A673 (cell line): ENCODE measurements at regions of chr13 and their contacts with region 1.

Region 1: GRCh38 chr13:36480726-36481427 is 48.6 kb downstream of the CCNA1 start:
- DNase-seq: peak; percentile 99
- H3K4me3 ChIP-seq: no peak overlapping the region
- H3K27ac ChIP-seq: peak overlapping the region; percentile 100
- H3K4me1 ChIP-seq: peaks cover 42% of the 10 kb centered on the region
- H3K27me3 ChIP-seq: no peaks in the 10 kb centered on the region
- CTCF ChIP-seq: no peak

Region 2: DNA sequence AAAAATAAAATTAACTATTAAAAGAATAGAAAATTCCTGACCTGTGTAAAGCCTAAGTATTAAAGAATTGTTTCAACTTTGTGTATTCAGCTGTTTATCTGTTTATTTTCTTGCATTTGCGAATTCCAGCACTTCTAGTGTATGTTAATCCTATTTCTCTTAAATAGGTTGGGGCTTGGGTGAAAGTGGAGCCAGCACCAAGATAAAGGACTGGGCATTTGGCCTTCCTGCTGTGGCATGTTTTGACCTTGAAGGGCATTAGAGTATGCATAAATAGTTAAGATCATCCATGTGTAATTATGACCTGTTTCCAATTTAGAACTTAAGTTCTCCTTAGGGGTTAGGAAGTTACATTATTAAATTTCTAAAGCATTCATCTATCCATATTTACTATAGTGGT is 1387.5 kb before region 1 on chr13:
- CTCF ChIA-PET with region 1: no interaction called
- POLR2A ChIA-PET with region 1: no interaction called
- intact Hi-C with region 1: no loop called
- DNase-seq: no peak
- H3K4me3 ChIP-seq: no peak overlapping the region
- H3K27ac ChIP-seq: no peak overlapping the region
- H3K4me1 ChIP-seq: no peaks in the 10 kb centered on the region
- H3K27me3 ChIP-seq: no peaks in the 10 kb centered on the region
- CTCF ChIP-seq: no peak

Region 3: DNA sequence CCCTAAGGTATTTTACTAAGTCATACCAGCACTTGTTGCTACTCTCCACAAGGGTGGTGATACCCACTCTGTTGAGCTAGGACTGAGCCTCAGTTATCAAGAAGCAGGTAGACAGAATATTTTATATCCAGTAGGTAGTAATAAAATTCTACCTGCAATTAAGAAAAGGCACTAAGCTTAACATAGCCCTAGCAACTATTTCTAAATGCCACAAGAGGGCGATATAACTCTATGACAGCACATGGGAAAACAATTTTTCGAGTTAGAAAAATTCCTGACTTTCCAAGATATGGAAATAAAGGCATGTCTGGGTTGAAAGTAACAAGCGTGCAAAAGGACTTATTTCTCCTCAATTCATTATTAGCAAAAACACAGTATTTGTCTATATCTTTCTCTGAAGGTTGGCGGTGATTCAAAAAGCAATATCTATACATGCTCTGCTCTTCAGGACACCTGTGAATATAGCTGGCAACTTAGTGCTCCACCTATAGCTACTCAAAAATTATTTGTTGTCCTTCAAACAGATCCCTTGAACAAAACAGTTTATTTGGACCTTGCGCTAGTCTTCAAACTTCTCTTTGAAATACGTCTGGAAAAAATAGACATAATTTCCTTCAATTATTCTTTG is 197.9 kb before region 1 on chr13:
- CTCF ChIA-PET with region 1: interaction called, 4 read pairs
- POLR2A ChIA-PET with region 1: no interaction called
- intact Hi-C with region 1: loop called (anchors 2 kb)
- DNase-seq: peak; percentile 71
- H3K4me3 ChIP-seq: no peak overlapping the region
- H3K27ac ChIP-seq: no peak overlapping the region
- H3K4me1 ChIP-seq: peaks cover 15% of the 10 kb centered on the region
- H3K27me3 ChIP-seq: no peaks in the 10 kb centered on the region
- CTCF ChIP-seq: peak; percentile 86

Region 4: GRCh38 chr13:36420437-36420891 is 60.4 kb before region 1 on chr13:
- CTCF ChIA-PET with region 1: interaction called, 3 read pairs
- POLR2A ChIA-PET with region 1: no interaction called
- intact Hi-C with region 1: loop called (anchors 2 kb)
- DNase-seq: peak; percentile 92
- H3K4me3 ChIP-seq: no peak overlapping the region
- H3K27ac ChIP-seq: peak overlapping the region; percentile 31
- H3K4me1 ChIP-seq: peaks cover 39% of the 10 kb centered on the region
- H3K27me3 ChIP-seq: no peaks in the 10 kb centered on the region
- CTCF ChIP-seq: peak; percentile 92

Region 5: DNA sequence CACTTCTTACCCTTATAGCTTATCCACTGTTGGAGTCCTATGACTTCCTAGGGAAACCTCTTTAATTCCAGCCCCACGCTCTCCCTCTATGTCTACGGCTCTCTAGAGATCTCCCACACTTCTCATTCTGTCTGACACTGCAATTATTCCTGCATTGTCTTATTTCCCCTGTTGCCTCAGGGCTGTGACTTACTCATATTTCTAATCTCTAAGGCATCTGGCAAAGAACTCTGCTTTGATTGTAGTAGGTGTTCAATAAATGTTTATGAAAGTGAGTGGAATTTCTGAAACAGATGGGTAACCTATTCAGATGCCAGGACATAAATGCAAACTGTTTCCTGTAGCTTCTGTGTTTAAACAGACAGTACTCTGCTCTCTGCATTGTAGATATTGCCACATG is 90.6 kb after region 1 on chr13:
- CTCF ChIA-PET with region 1: no interaction called
- POLR2A ChIA-PET with region 1: no interaction called
- intact Hi-C with region 1: loop called (anchors 2 kb)
- DNase-seq: peak; percentile 87
- H3K4me3 ChIP-seq: no peak overlapping the region
- H3K27ac ChIP-seq: peak overlapping the region; percentile 82
- H3K4me1 ChIP-seq: peaks cover 48% of the 10 kb centered on the region
- H3K27me3 ChIP-seq: no peaks in the 10 kb centered on the region
- CTCF ChIP-seq: no peak

Region 6: DNA sequence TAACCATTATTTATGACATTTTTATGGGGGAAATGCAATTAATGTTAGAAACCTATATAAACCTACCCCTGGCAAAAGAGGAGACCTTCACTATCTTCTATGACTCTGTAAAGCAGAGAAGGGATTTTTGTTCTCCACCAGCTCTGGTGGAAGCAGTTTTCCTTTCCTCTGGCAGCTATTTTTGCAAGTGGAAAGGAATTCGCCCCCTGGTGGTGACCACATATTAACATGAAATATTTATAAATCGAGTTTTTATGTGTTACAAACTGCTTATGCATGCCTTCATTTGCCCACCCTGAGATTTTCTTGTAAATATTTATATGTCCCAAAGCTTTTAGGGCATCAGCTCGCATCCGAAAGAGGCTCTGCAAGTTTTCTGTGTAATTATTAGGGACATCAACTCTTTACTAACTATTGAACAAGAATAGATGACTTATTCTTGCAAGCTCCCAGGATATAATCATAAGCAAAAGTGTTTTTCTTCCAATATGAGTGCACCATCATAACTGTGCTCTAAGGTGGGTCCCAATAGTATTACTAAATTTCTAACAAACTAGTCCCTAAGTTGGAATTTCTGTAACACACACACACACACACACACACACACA is 255.3 kb after region 1 on chr13:
- CTCF ChIA-PET with region 1: interaction called, 6 read pairs
- POLR2A ChIA-PET with region 1: no interaction called
- intact Hi-C with region 1: loop called (anchors 5 kb)
- DNase-seq: peak; percentile 86
- H3K4me3 ChIP-seq: no peak overlapping the region
- H3K27ac ChIP-seq: peak overlapping the region; percentile 32
- H3K4me1 ChIP-seq: peaks cover 30% of the 10 kb centered on the region
- H3K27me3 ChIP-seq: no peaks in the 10 kb centered on the region
- CTCF ChIP-seq: peak; percentile 75

Region 7: GRCh38 chr13:36841391-36841790 is 360.5 kb after region 1 on chr13:
- CTCF ChIA-PET with region 1: interaction called, 8 read pairs
- POLR2A ChIA-PET with region 1: interaction called, 3 read pairs
- intact Hi-C with region 1: loop called (anchors 1 kb)
- DNase-seq: peak; percentile 85
- H3K4me3 ChIP-seq: no peak overlapping the region
- H3K27ac ChIP-seq: peak overlapping the region; percentile 82
- H3K4me1 ChIP-seq: peaks cover 61% of the 10 kb centered on the region
- H3K27me3 ChIP-seq: no peaks in the 10 kb centered on the region
- CTCF ChIP-seq: peak; percentile 48